HEK293 (cell line): ENCODE measurements at regions of chr6 and their contacts with region 1.

Region 1: DNA sequence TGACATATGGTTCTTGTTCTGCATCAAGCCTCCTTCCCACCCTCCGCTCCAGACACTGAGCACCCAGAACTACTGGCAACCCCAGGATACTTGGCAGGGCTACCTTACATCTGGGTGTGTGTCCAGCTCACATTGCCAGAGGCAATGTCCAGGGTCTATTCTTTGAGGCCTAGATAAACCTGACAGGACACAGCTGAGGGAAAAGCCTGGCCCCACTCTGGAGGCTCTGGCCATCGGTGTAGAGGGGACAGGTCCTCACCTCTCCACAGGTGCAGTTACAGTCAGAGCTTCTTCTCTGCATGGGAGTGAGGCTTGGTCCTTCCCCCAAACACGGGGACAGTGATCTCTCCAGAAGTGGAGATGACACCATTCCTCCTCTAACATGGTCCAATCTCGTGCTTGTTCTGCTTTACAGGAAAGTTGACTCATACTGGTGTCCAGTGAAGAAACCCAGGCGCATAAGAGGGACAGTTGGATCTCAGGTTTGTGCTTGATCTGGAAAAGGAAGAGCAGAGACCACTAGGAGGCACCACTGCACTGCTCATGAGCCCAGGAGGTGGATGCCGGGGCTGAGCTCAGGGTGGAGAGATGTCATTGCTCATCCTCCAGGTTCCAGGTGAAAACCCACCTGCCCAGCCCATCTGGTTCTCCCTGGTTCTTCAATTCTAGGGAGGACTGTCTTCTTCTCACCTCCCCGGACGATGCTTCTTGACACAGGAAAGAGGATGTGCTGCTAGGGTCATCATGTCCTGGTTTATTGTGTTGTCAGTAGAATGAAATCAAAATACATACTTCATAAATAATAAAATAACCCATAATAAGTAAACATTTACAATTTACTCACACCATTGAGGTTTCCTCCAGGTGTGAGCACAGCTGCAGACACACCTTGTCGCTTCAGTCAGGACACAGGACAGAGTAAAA is 14.7 kb downstream of the HLA-F start:
- H3K4me3 ChIP-seq: no peak overlapping the region
- H3K27ac ChIP-seq: no peak overlapping the region
- H3K4me1 ChIP-seq: no peaks in the 10 kb centered on the region
- CTCF ChIP-seq: peak; percentile 87

Region 2: GRCh38 chr6:29399525-29399924 is 338.4 kb before region 1 on chr6:
- CTCF ChIA-PET with region 1: no interaction called
- POLR2A ChIA-PET with region 1: no interaction called
- H3K4me3 ChIP-seq: no peak overlapping the region
- H3K27ac ChIP-seq: no peak overlapping the region
- H3K4me1 ChIP-seq: no peaks in the 10 kb centered on the region
- CTCF ChIP-seq: no peak

Region 3: DNA sequence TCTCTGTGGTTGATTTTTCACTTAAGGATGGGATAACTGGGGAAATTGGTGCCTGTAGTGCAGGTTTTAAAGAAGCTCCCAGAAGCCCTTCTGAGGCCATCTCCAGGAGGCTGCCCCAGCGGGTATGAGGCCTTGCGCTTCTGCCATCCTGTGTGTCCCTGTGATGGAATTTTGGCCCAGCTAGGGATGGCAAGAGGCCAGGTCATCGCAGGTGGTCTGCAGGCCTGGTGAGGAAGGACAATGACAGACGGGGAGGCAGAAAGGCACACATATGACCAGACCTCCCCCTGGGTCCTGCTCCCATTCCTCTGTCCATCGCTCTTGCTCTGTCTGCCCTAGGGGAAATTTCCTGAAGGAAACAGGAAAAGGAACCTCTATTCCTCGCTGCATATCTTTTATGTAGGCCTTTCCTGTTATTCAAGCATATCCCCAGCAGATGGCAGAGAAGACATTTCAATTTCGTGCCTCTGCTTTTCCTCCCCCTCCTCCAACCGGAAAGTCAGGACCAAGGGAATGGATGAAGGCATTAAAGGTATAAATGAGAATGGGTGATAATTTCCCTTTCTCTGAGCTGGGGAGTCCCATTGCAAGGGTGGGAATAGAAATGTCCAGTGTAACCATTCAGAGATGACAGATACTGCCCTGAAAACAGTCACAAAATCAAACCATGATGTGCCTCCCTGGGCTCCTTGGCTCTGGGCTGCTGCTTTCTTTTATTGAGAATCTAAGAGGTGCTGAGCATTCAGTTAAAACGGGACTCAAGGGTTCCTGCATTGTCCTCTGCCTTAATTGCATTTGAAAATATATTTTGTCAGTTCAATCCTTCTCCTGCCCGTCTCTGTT is 32.4 kb before region 1 on chr6:
- CTCF ChIA-PET with region 1: interaction called, 18 read pairs
- POLR2A ChIA-PET with region 1: no interaction called
- H3K4me3 ChIP-seq: no peak overlapping the region
- H3K27ac ChIP-seq: no peak overlapping the region
- H3K4me1 ChIP-seq: no peaks in the 10 kb centered on the region
- CTCF ChIP-seq: peak; percentile 62

Region 4: DNA sequence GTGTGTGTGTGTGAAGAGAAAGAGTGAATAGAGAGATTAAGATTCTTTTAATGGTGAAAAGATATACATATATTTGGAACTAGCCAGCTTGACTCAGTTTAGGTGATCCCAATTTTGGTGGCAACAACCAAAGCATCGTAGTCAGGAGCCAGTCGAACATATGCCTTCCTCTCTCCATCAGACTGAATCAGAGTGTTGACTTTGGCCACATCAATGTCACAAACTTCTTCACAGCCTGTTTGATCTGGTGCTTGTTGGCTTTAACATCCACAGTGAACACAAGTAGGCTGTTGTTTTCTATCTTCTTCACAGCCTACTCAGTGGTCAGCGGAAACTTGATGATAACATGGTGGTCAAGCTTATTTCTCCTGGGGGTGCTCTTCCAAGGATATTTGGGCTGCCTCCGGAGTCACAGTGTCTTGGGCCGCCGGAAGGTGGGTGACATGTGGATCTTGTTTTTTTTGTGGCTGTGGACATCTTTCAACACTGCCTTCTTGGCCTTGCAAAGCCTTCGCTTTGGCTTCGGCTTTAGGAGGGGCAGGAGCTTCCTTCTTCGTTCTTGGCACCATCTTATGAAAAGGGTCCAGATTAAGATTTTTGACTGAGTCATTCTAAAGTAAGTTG is 11.3 kb before region 1 on chr6:
- CTCF ChIA-PET with region 1: interaction called, 19 read pairs
- POLR2A ChIA-PET with region 1: no interaction called
- H3K4me3 ChIP-seq: no peak overlapping the region
- H3K27ac ChIP-seq: no peak overlapping the region
- H3K4me1 ChIP-seq: no peaks in the 10 kb centered on the region; the same call in 1 of the 2 replicates
- CTCF ChIP-seq: no peak

Region 5: GRCh38 chr6:29757701-29758293 is 19.8 kb after region 1 on chr6:
- CTCF ChIA-PET with region 1: interaction called, 127 read pairs
- POLR2A ChIA-PET with region 1: interaction called, 3 read pairs
- H3K4me3 ChIP-seq: no peak overlapping the region
- H3K27ac ChIP-seq: no peak overlapping the region; the same call in 1 of the 2 replicates
- H3K4me1 ChIP-seq: no peaks in the 10 kb centered on the region
- CTCF ChIP-seq: no peak

Region 6: DNA sequence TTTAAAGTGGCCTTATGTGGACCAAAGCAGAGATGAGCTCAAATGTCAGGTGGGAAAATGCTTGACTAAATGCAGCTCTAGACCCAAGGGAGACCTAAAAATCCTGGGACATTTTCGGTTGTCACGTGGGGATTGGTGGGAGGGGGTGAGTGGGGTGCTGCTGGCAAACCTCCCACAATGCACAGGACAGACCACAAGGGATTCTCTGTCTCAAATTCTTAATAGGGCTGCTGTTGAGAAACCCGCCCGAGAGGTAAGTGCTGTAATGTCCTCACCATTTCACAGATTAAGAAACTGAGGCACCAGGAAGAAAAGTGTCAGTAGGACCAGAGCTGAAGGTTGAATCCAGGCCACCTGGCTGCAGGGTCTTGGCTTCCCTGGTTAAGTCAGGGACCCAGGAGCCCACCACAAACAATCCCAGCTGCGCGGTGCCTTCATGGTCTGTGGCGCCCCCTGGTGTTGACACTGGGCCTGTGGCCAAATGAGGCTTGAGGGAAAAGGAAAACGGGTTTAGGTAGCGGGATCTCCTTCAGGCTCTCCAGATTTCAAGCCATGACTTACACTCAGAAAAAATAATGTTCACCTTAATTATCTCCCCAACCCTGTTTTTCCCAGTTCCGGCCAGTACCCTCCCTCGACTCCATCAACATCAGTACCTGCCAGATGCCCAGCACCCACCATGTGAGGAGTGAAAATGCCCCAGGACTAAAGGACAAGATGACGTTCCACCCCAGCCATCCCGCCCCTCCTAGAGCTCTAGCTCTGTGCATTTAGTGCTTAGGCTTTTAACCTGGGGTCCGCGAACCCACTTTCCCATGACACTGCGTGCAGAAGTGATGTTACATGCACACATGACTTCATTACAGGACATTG is 96.8 kb after region 1 on chr6:
- CTCF ChIA-PET with region 1: interaction called, 158 read pairs
- POLR2A ChIA-PET with region 1: no interaction called
- H3K4me3 ChIP-seq: no peak overlapping the region
- H3K27ac ChIP-seq: no peak overlapping the region
- H3K4me1 ChIP-seq: no peaks in the 10 kb centered on the region
- CTCF ChIP-seq: peak; percentile 58; the same call in 1 of the 2 replicates

Region 7: GRCh38 chr6:29847871-29848630 is 110.1 kb after region 1 on chr6:
- CTCF ChIA-PET with region 1: interaction called, 14 read pairs
- POLR2A ChIA-PET with region 1: no interaction called
- H3K4me3 ChIP-seq: no peak overlapping the region
- H3K27ac ChIP-seq: no peak overlapping the region
- H3K4me1 ChIP-seq: no peaks in the 10 kb centered on the region
- CTCF ChIP-seq: peak; percentile 95